B cell (primary cell): ENCODE measurements at regions of chr2 and their contacts with region 1.

Region 1: DNA sequence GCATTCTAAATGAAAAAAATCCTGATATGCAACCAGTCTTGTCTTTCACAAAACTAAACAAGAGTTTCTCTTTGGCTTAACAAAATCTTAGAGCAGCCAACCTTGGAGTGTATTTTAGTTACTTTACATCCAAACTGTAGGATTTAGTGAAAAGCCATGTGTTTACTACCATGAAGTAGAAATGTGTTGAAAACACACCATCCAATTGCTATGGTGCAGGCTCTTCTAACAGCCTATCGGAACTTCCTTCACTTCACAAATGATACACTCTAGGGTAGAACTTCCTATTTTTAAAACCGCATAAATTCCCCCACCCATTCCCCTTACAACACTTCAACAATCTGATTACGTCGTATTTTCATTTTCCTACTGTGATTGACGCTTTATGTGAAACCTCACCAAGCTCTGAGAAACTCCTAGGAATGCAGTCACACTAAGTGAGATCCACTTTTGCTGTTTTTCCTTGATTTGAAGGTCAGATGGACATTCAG is 74.4 kb upstream of the MAP4K4 start:
- DNase-seq: peak; percentile 89
- ATAC-seq: peak; percentile 86
- H3K4me3 ChIP-seq: peak overlapping the region; percentile 9 to 56 (median 16)
- H3K4me3 Mint-ChIP-seq: peak overlapping the region; percentile 62
- H3K27ac ChIP-seq: peak overlapping the region; percentile 75 to 88
- H3K27ac Mint-ChIP-seq: peak overlapping the region; percentile 80
- H3K4me1 ChIP-seq: peaks cover 42 to 57% of the 10 kb centered on the region in 2 donors
- H3K4me1 Mint-ChIP-seq: peaks cover 71% of the 10 kb centered on the region
- H3K27me3 ChIP-seq: no peaks in the 10 kb centered on the region
- H3K27me3 Mint-ChIP-seq: no peaks in the 10 kb centered on the region
- CTCF ChIP-seq: no peak

Region 2: DNA sequence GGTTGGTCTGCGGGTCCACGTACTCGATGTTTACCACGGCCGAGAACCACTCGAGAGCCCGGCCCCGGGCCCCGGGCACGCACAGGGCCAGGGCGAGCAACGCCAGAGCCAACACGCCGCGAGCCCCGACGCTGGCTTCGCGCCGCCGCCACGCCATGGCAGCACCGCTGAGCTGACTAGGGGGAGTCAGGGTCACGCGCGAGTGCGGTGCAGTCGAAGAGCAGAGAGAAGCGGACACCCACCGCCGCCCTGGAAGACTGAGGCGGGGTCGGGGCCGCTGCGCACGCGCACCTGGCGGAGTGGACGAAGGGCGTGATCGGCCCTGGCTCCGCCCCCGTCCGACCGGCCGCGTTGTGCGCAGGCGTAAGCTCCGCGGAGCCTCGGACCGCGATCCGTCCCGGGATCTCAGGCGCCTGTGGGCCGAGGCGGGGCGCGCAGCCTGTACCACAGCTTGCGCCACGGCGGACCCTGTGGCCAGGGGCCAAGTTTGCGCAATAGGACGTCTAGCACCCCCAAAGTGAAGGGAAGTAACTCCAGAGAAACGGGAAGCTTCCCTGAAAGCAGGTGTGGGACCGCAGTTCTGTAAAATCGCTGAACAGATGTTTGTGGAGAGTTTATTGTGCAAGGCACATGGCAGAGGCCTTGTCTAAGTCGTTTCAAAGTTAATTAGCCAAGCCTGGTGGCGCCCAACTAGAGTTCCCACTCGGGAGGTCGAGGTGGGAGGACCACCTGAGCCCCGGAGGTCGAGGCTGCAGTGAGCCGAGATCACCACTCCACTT is 314.5 kb before region 1 on chr2 and contains the start of gene RNF149:
- CTCF ChIA-PET with region 1: no interaction called
- POLR2A ChIA-PET with region 1: no interaction called
- intact Hi-C with region 1: loop called (anchors 2 kb)
- DNase-seq: peak; percentile 94
- ATAC-seq: peak; percentile 82
- H3K4me3 ChIP-seq: peak within 1 kb of the TSS; percentile 57 to 93 (median 76)
- H3K4me3 Mint-ChIP-seq: peak within 1 kb of the TSS; percentile 93
- H3K27ac ChIP-seq: peak within 1 kb of the TSS; percentile 84 to 85
- H3K27ac Mint-ChIP-seq: peak within 1 kb of the TSS; percentile 92
- H3K4me1 ChIP-seq: peaks cover 32 to 44% of the 10 kb centered on the region in 2 donors
- H3K4me1 Mint-ChIP-seq: peaks cover 54% of the 10 kb centered on the region
- H3K27me3 ChIP-seq: no peaks in the 10 kb centered on the region
- H3K27me3 Mint-ChIP-seq: no peaks in the 10 kb centered on the region
- CTCF ChIP-seq: no peak
- total RNA-seq, gene RNF149: 71.6 and 78.0 TPM in 2 replicates

Region 3: DNA sequence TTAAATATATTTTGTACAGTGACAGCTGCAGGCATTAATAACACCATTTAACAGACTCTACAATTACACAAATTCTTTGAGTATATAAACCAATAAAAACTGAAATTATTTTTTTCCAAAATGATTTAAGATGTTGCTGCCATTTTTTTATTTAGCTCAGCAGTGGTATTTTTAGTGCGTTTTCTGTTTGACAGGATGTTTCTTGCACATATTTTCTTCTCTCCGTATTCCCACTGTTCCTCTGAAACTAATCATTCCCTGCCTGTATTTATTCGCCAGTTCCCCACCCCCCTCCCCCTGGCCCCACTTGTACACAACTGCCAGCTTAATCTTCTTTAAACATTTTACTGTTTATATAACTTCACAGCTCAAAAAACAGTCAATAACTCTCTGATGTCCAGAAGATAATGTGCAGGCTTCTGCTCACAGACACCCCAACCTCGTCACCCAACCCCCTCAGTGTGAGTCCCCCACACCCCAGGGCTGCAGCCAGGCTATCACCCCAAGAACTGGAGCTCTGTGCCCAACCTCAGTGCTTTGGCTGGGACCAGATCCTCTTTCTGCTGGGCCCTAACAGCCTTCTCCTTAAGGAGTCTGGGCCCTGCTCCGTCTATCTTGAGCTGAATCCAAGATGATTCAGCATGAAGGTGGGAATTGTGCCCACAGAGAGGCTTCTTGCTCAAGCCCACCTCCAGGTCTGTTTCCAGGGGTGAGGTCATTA is 32.8 kb after region 1 on chr2:
- CTCF ChIA-PET with region 1: no interaction called
- POLR2A ChIA-PET with region 1: no interaction called
- intact Hi-C with region 1: loop called (anchors 1 kb)
- DNase-seq: no peak
- ATAC-seq: no peak
- H3K4me3 ChIP-seq: no peak overlapping the region
- H3K4me3 Mint-ChIP-seq: no peak overlapping the region
- H3K27ac ChIP-seq: no peak overlapping the region
- H3K27ac Mint-ChIP-seq: no peak overlapping the region
- H3K4me1 ChIP-seq: peaks cover 11 to 16% of the 10 kb centered on the region in 2 donors
- H3K4me1 Mint-ChIP-seq: peaks cover 15% of the 10 kb centered on the region
- H3K27me3 ChIP-seq: no peaks in the 10 kb centered on the region
- H3K27me3 Mint-ChIP-seq: no peaks in the 10 kb centered on the region
- CTCF ChIP-seq: no peak

Region 4: GRCh38 chr2:101770726-101771125 is 147.7 kb after region 1 on chr2:
- CTCF ChIA-PET with region 1: no interaction called
- POLR2A ChIA-PET with region 1: no interaction called
- intact Hi-C with region 1: loop called (anchors 5 kb)
- DNase-seq: peak; percentile 59
- ATAC-seq: no peak
- H3K4me3 ChIP-seq: no peak overlapping the region
- H3K4me3 Mint-ChIP-seq: peak overlapping the region; percentile 30
- H3K27ac ChIP-seq: no peak overlapping the region
- H3K27ac Mint-ChIP-seq: peak overlapping the region; percentile 73
- H3K4me1 ChIP-seq: peaks cover 70 to 82% of the 10 kb centered on the region in 2 donors
- H3K4me1 Mint-ChIP-seq: peaks cover 91% of the 10 kb centered on the region
- H3K27me3 ChIP-seq: no peaks in the 10 kb centered on the region
- H3K27me3 Mint-ChIP-seq: no peaks in the 10 kb centered on the region
- CTCF ChIP-seq: peak; percentile 60